Adrenal gland (tissue), 19 donors: ENCODE measurements at regions of chr20 and their contacts with region 1.

Region 1: DNA sequence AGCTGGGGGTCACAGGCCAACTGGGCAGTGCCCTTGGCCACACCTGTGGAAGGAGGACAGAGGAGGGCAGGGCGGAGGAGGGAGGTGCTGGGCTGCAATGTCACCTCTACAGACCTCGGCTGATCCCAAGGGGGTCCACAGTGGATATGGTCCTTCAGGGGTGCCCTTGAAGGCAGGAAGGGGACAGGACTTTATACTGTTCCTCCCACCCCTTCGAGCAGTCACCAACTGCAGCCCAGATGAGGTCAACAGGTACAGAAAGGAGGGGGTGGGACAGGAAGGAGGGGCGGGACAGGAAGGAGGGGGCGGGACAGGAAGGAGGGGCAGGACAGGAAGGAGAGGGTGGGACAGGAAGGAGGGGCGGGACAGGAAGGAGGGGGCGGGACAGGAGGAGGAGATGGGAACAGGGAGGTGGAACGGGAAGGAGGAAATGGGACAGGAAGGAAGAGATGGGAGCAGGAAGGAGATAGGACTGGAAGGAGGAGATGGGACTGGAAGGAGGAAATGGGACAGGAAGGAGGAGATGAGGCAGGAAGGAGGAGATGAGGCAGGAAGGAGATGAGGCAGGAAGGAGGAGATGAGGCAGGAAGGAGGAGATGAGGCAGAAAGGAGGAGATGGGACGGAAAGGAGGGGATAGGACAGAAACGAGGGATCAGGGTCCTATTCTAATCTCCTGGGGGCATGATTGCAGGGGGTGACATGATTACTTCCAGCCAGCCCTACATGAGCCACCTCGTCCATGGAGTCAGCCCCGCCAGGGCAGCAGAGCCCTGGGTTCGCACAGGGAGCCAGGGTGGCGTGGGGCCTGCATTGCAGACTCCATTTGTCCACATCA is 19.4 kb upstream of the MRGBP start:
- DNase-seq: no peak
- H3K4me3 ChIP-seq: no peak overlapping the region
- H3K27ac ChIP-seq: peak overlapping the region in 1 of 5 donors; percentile 55
- H3K4me1 ChIP-seq: peaks cover 4 to 6% of the 10 kb centered on the region in 2 donors
- H3K27me3 ChIP-seq: peaks cover 8% of the 10 kb centered on the region
- CTCF ChIP-seq: no peak
- POLR2A ChIP-seq: no peak

Region 2: GRCh38 chr20:62685781-62686555 is 90.9 kb before region 1 on chr20:
- intact Hi-C with region 1: loop called in 1 of 2 experiments (anchors 5 kb)
- DNase-seq: peak in 3 of 7 donors; percentile 23 to 60 (median 34)
- H3K4me3 ChIP-seq: no peak overlapping the region
- H3K27ac ChIP-seq: no peak overlapping the region
- H3K4me1 ChIP-seq: no peaks in the 10 kb centered on the region
- H3K27me3 ChIP-seq: peaks cover 26% of the 10 kb centered on the region
- CTCF ChIP-seq: no peak
- POLR2A ChIP-seq: no peak